Posterior vena cava (tissue), 2 donors: ENCODE measurements at regions of chr11 and their contacts with region 1.

Region 1: DNA sequence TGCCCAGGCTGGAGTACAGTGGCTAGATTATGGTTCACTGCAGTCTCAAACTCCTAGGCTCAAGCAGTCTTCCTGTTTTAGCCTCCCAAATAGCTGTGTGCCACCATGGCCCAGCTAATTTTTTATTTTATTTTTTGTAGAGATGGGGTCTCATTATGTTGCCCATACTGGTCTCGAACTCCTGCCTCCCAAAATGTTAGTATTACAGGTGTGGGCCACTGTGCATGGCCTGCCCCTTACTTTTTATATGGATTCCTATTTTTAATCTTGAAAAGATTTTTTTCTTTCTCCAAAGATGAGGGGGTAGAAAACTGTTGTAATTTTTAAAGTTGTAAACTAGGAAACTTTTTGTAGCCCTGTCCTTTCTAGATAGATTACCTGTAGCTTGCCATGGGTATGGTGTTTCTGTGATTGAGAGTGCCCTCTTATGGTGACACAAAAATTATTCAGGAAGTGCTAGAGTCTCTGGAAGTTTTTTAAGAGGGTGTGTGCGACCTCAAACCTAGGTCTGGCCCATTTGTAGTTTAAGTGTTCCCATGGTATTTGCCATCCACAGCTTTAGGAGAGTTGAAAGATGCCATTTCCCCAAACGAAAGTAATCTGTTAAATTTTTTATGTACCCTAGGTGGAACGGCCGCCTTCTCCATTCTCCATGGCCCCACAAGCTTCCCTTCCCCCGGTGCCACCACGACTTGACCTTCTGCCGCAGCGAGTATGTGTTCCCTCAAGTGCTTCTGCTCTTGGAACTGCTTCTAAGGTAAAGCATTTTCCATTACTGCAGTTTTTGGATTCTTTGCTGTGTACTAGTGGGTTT is 32.4 kb downstream of the MCAM start:
- DNase-seq: no peak

Region 2: DNA sequence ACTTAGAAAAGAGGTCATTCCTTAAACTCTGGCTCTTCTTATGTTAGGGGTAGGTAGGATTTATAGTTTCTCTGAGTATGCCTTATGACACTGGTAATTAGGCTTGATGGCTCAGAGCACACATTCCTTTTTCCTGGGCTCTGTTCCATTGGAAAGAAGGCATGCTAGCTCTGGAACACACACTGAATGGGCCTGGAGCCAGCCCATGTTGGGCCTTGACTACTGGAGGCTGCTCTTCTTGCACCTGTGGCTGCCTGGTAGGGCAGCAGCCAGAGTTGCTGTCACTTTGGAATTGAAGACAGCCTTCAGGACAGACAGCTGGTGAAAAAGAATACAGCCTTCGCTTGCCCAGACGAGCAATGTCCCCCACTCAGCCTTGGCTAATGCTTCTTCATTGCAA is 14.2 kb after region 1 on chr11:
- intact Hi-C with region 1: loop called in 1 of 2 experiments (anchors 1 kb)
- DNase-seq: no peak